Head of caudate nucleus (tissue), 42 donors: ENCODE measurements at regions of chr19 and their contacts with region 1.

Region 1: GRCh38 chr19:6424939-6425731 is 524 bp upstream of the KHSRP start:
- DNase-seq: peak; percentile 88 to 100 (median 100)

Region 2: DNA sequence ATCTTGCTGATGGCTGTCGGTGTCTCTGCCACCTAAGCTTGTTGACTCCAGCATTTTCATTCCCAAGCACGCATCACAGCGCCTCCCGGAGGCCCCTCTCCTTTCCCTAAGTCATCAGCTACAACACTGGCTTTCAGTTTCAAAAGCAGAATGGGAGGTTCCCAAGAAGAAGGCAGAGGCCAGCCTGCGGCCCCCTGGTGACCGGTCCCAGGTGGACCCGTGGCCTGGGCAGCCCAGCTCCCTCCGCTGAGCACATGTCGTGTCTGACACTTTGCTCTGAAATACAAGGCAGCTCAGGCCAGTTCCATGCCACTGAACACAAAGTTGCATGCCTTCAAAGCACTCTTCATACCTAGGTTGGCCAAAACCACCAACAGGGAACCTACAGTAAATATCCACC is 153.9 kb before region 1 on chr19:
- intact Hi-C with region 1: no loop called
- DNase-seq: peak in 14 of 42 donors; percentile 21 to 60 (median 44)

Region 3: GRCh38 chr19:6393074-6393983 is 31.8 kb before region 1 on chr19 and contains the start of gene GTF2F1:
- intact Hi-C with region 1: loop called (anchors 2 kb)
- DNase-seq: peak; percentile 90 to 98 (median 96)

Region 4: DNA sequence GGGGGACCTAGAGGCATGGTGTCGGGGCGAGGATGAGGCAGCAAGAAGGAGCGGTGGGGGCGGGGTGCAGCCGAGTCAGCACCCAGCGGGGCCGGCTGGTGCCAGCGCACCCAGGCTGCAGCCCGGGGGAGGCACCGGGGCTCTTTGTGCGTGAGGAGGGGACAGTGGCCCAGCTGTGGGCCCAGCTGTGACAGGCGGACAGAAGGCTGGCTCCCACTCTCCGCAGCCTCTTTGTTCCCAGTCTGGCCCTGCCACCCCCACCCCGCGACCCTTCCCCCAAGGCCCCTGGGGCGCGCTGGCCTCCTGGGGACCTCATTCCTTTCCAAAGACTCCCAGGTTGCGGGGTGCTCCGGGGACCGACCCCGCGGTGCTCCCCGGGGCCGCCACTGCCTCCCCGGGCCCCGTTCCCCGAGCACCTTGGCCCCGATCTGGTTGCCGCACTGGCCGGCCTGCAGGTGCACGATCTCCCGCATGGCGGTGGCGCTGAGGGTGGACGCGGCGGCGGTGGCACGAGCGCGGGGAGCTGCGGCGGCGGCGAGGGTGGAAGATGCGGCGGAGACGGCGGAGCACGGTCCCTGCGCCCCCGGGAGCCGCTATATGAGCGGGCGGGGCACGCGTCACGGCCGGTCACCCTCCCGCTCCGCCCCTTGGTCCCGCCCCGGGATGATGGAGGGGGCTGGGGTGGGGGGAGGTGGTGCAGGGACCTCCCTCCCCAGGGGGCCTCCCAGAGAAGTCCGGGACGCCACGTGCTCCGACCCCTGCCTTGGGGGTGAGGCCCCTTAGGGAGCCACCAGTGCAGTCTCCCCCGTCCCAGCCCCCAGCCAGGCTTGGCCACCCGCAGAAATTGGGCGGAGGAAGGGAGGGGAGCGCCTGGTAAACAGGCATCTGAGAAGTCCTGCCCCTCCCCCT is 76.9 kb after region 1 on chr19 and contains the start of gene TUBB4A:
- intact Hi-C with region 1: no loop called
- DNase-seq: peak; percentile 73 to 97 (median 93)